ENCODE measurements at regions of chr3 and their contacts with region 1.

Region 1: GRCh38 chr3:10115326-10116137 is at the start of gene BRK1:
- DNase-seq: peak; percentile 97
- H3K4me3 ChIP-seq: peak within 1 kb of the TSS; percentile 50 to 93 (median 75)
- H3K27ac ChIP-seq: peak within 1 kb of the TSS; percentile 75 to 87 (median 82)
- H3K4me1 ChIP-seq: peaks cover 0 to 32% (median 26%) of the 10 kb centered on the region in 4 donors
- H3K27me3 ChIP-seq: no peaks in the 10 kb centered on the region
- CTCF ChIP-seq: no peak
- EP300 ChIP-seq: no peak
- POLR2A ChIP-seq: peak; percentile 81 to 86
- total RNA-seq, gene BRK1: 111 to 239 (median 152) TPM

Region 2: GRCh38 chr3:9986237-9986725 is 129.3 kb before region 1 on chr3:
- intact Hi-C with region 1: loop called (anchors 10 kb)
- DNase-seq: no peak
- H3K4me3 ChIP-seq: peak overlapping the region; percentile 62 to 94 (median 86)
- H3K27ac ChIP-seq: peak overlapping the region; percentile 78 to 87 (median 82)
- H3K4me1 ChIP-seq: peaks cover 0 to 39% (median 38%) of the 10 kb centered on the region in 4 donors
- H3K27me3 ChIP-seq: no peaks in the 10 kb centered on the region
- CTCF ChIP-seq: no peak
- EP300 ChIP-seq: no peak
- POLR2A ChIP-seq: no peak

Region 3: DNA sequence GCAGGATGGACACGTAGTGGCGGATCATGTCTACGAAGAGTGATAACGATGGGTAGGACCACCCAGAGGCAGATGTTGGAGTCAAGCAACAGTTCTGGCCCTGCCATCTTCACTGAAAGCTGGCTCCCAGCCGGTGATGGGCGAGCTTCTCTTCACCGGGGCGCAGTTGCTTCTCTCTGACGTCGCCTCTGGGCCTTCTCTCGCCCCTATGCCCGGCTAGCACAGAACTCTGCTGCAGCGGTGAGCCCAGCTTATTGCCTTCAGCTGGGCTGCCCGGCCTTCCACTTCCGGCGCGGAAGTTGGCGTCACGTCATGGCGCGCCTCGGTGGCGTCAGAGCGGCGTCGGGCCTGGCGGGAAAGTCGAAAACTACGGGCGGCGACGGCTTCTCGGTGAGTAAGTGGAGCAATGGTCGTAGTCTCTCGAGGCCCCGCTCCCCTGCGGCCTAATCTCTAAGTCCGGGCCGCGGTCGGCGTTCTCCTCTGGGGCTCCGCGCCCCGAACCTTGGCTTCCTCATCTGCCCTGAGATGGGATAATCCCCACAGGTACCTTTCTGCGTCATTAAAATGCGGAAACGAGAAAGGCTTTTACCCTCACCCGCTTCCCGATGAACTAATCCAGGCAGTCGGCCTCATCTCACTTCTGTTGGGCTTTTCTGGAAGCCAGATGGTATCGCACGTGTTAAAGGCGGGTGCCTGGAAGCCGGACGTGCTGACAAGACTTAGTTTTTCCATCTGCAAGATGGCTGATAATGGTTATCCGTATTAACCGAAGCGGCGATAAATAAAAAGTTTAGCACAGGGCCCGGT is 89.2 kb before region 1 on chr3 and contains the start of gene FANCD2:
- intact Hi-C with region 1: loop called (anchors 5 kb)
- DNase-seq: peak; percentile 92
- H3K4me3 ChIP-seq: peak within 1 kb of the TSS; percentile 73 to 93 (median 83)
- H3K27ac ChIP-seq: peak within 1 kb of the TSS; percentile 77 to 85 (median 81)
- H3K4me1 ChIP-seq: peaks cover 0 to 28% (median 25%) of the 10 kb centered on the region in 4 donors
- H3K27me3 ChIP-seq: no peaks in the 10 kb centered on the region
- CTCF ChIP-seq: no peak
- EP300 ChIP-seq: peak in 1 of 4 donors; percentile 60
- POLR2A ChIP-seq: peak; percentile 74 to 78
- total RNA-seq, gene FANCD2: 1.5 to 5.8 (median 3.1) TPM

Region 4: DNA sequence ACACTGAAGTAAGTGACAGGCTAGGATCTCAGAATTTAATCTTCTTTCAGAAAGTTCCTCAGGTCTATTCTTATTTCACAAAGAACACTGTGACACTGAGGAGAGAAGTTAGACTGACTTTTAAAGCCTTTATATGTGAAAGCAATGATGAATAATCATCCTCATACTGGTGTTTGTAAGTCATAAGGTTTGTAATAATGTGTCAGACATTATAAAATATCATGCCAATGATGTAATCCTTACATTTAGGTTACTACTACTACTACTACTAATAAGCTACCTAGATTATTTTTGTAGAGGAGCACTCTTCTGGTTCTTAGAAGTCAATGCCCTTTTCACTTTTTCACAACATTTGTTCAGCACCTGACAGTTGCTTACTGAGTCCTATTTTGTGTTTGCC is 40.9 kb before region 1 on chr3:
- intact Hi-C with region 1: no loop called
- DNase-seq: no peak
- H3K4me3 ChIP-seq: no peak overlapping the region
- H3K27ac ChIP-seq: no peak overlapping the region
- H3K4me1 ChIP-seq: no peaks in the 10 kb centered on the region
- H3K27me3 ChIP-seq: no peaks in the 10 kb centered on the region
- CTCF ChIP-seq: no peak
- EP300 ChIP-seq: no peak
- POLR2A ChIP-seq: no peak